GM10248 (cell line): ENCODE measurements at regions of chr5 and their contacts with region 1.

Region 1: GRCh38 chr5:10627160-10627701 is 63.4 kb downstream of the ANKRD33B start:
- DNase-seq: peak; percentile 56
- CTCF ChIP-seq: no peak

Region 2: DNA sequence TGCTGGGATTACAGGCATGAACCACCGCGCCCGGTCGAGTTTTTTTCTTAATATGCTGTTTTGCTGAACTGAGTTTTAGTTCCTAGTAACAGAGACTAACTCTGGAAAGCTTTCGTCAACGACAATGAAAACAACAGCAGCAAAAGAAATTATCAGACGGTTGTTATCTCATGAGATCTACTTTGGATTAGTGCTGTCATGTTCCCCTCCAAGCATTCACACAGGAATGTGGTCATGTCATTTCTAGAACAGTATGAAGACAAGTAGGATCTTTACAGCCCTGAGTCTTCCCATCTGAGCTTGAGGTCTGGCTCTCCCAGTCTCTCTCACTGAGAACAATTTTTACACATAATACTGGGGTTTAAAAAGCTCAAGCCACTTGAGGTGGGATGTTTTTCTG is 67.4 kb before region 1 on chr5:
- CTCF ChIA-PET with region 1: interaction called, 11 read pairs
- POLR2A ChIA-PET with region 1: no interaction called
- DNase-seq: no peak
- CTCF ChIP-seq: no peak

Region 3: GRCh38 chr5:10583663-10584572 is 43.3 kb before region 1 on chr5:
- CTCF ChIA-PET with region 1: interaction called, 17 read pairs
- POLR2A ChIA-PET with region 1: no interaction called
- DNase-seq: no peak
- CTCF ChIP-seq: no peak

Region 4: DNA sequence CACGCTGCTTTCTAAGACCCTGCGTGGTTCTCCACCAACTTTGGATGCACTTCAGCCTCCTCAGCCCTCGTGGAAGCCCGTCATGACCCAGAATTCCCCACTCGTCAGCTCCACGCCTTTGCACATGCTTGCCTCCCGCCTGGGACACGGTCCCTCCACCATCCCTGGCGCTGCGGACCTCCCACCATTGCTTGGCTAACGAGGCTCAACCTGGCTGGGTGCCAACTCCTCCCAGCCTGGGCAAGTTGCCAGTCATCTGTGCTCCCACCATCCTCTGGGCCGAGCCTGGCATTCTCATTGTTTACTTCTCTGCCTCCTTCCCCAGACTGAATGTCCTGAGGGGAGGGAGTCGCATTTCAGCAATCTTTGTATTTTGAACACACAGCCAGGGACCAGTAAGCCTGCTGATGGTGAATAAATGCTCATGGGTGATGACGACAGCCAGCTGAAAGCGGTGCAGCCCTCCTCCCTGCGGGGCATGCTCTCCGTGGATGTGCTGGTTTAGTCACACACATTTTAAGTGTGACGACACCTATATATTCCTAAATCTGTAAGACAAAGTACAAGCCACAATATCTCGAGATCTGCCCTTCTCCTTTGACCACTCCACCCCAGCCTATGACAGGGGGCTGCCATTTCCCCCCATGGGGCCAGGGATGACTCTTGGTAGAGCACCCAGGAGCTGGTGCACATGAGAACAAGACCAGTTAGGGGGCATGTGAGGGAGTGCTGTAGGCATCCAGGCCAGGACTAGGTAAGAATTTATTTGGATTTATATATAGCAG is 25.8 kb before region 1 on chr5:
- CTCF ChIA-PET with region 1: interaction called, 148 read pairs
- POLR2A ChIA-PET with region 1: interaction called, 9 read pairs
- DNase-seq: no peak
- CTCF ChIP-seq: no peak

Region 5: GRCh38 chr5:10684303-10685086 is 57.3 kb after region 1 on chr5:
- CTCF ChIA-PET with region 1: interaction called, 18 read pairs
- POLR2A ChIA-PET with region 1: interaction called, 9 read pairs
- DNase-seq: peak; percentile 56
- CTCF ChIP-seq: no peak